Aorta (tissue), 5 donors: ENCODE measurements at regions of chr10 and their contacts with region 1.

Region 1: GRCh38 chr10:132497023-132497680 is 40.4 kb upstream of the INPP5A start:
- DNase-seq: peak in 1 of 2 donors; percentile 45
- ATAC-seq: no peak
- H3K4me3 ChIP-seq: no peak overlapping the region
- H3K27ac ChIP-seq: no peak overlapping the region
- H3K4me1 ChIP-seq: no peaks in the 10 kb centered on the region
- H3K27me3 ChIP-seq: no peaks in the 10 kb centered on the region

Region 2: GRCh38 chr10:132347211-132347930 is 149.8 kb before region 1 on chr10:
- intact Hi-C with region 1: no loop called
- DNase-seq: peak; percentile 30 to 64
- ATAC-seq: no peak
- H3K4me3 ChIP-seq: no peak overlapping the region
- H3K27ac ChIP-seq: no peak overlapping the region
- H3K4me1 ChIP-seq: no peaks in the 10 kb centered on the region
- H3K27me3 ChIP-seq: no peaks in the 10 kb centered on the region

Region 3: GRCh38 chr10:132458593-132459300 is 38.4 kb before region 1 on chr10:
- intact Hi-C with region 1: loop called in 1 of 2 experiments (anchors 5 kb)
- DNase-seq: peak; percentile 64 to 89
- ATAC-seq: peak; percentile 70
- H3K4me3 ChIP-seq: no peak overlapping the region
- H3K27ac ChIP-seq: no peak overlapping the region
- H3K4me1 ChIP-seq: no peaks in the 10 kb centered on the region
- H3K27me3 ChIP-seq: no peaks in the 10 kb centered on the region

Region 4: DNA sequence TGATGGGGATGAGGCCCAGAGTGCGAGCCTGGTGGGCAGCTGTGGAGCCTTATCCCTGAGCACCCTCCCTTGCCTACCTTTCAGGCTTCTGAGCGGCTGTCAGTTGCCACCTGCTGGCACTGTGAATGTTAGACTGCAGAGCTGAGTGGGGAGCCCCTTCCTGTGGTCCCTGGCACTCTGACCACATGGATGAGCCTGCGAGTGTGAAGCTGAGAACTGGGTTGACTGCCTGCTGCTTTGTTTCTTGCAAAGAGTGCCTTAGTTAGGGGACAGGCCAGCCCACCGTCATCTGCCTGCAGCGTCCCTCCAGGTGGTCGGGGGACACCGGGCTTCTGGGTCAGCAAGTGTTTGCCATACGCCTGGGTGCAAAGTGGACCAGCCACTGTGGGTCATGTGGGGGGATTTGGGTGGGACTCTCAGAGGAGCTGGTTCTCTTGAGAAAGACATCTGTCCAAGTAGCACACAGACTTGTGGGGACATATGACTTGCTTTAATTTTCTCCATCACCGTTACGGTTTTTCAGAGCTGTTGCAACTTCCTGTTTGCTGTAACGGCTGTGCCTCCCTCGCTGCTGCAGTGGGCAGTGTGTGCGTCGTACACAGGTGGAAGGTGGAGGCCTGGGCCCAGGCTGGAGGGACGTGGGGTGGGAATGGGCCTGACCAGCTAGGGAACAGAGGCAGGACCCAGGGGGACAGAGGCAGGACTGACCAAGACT is 54.1 kb after region 1 on chr10:
- intact Hi-C with region 1: no loop called
- DNase-seq: no peak
- ATAC-seq: no peak
- H3K4me3 ChIP-seq: no peak overlapping the region
- H3K27ac ChIP-seq: no peak overlapping the region
- H3K4me1 ChIP-seq: no peaks in the 10 kb centered on the region
- H3K27me3 ChIP-seq: no peaks in the 10 kb centered on the region